Activated T-helper 1 cell treated with anti-CD3 and anti-CD28 coated beads, Interleukin-12 subunit alpha, Interleukin-12 subunit beta, Interleukin-2, Interleukin-4 antibody, amounts not matched to agents 30 ng/mL and 10 ng/mL and 1 ng/mL, durations not matched to agents 14 hours and 24 hours and 36 hours (primary cell): ENCODE measurements at regions of chr17 and their contacts with region 1.

Region 1: DNA sequence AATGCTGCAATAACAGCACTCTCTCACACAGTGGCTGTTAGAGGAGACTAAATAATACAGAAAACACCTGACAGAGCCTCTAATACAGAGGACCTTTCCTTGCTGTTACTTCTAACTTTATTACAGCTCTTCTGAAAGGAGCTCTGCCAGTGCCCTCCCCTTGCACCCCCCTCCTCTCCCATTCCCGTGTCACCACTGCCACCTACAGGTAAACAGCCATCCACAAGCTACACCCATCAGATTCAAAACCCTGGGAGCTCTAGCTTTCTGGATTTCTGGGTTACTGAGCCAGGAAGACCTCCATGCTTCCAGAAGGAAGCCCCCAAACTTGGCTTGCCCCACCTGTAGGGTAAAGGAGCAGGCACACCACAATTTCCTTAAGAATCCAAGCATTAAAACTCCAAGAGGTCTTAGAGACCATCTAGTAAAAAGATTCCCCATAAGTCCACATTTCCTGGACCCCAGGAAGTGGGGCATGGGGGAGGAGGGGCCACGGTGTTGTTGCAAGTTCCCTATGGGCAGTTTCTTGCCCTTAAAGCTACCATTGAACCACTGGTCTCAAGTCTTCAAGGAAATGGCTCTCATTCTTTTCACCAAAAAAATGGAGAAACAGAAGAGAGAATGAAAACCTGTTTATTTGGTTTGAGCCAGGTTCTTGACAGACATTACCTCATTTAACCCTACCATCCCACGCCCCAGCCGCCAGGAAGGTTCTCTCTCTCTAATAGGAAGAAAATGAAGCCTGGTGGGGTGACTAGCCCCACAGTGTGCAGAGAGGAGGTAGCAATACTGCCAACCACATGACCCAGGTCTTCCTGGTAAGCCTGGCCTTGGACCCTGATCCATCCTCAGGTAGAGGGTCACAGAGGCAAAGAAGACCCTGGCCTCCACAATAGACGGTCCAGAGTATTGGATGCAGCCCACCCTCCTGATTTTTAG is 52.8 kb downstream of the TOM1L2 start:
- DNase-seq: peak; percentile 36
- H3K4me3 Mint-ChIP-seq: no peak overlapping the region
- H3K27ac Mint-ChIP-seq: no peak overlapping the region
- H3K4me1 Mint-ChIP-seq: peaks cover 7% of the 10 kb centered on the region
- H3K27me3 Mint-ChIP-seq: no peaks in the 10 kb centered on the region

Region 2: DNA sequence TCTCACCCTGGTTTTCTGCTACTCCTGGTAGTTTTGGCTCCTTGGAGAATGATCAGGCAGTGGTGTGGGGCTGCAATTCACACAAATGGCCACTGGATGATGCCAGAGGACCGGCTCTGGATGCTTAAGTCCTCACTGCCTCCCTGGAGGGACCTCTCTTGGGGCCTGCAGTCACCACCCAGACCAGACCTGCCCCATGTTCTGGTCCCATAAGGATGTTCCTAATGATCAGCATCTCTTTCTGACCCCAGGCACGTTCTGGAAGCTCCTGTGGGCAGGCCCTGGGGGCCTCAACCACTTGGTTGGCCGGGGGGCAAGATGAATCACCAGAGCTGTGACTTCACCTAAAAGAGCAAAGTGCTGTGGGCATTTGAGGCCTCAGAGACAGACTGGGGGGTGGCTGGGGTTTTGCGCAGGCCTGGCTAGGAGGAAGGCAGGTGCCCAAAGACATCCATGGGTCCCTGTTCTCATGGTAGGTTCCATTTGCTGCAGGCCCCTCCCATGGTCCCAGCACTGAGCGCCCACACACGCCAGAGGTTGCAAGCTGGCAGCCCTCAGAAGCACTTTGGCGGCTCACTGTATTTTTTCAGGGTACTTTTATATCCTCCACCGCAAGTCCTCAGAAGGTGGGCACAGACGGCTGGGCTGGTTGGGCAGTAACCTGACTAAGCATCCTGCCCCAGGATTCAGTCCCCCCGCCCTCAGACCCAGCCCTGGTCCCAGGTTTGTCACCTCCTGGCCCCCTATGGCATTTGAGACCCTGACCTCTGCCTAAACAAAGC is 563.1 kb before region 1 on chr17:
- intact Hi-C with region 1: loop called (anchors 1 kb)
- DNase-seq: peak; percentile 55
- H3K4me3 Mint-ChIP-seq: no peak overlapping the region
- H3K27ac Mint-ChIP-seq: no peak overlapping the region
- H3K4me1 Mint-ChIP-seq: no peaks in the 10 kb centered on the region
- H3K27me3 Mint-ChIP-seq: peaks cover 19% of the 10 kb centered on the region

Region 3: DNA sequence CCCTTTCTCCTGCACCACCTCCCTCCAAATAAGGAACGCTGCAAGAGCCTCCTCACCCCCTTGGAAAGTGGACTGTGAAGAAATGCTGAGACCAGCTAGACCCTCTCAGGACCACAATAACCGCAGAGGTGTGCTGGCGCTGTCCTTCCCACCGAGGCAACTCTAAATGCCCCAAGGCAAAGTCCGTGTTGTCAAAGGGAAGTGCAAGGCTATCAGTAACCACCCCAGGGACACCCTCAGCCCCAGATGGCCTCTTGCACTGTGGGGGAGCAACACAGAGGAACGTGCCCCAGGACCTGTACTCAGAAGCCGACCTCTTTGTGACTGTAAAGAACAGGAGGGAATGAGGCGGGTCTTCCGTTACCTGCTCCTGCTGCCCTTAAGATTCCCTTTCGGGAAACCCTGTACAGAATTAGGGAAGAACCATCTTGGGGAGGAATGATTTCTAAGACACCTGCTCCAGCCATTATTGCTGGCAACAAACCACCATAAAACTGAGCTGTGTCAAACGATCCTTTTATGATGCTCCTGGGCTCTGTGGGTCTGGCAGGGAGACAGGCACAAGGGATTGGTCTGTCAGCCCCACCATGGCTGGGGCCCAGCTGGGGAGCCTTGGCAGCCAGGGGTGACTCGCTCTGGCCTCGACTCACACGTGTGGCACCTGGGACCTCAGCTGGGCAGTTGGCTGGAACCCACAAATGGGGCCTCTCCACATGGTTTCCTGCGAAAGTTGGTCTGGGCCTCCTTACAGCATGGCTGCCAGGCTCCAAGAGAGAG is 457.2 kb before region 1 on chr17:
- intact Hi-C with region 1: no loop called
- DNase-seq: no peak
- H3K4me3 Mint-ChIP-seq: no peak overlapping the region
- H3K27ac Mint-ChIP-seq: no peak overlapping the region
- H3K4me1 Mint-ChIP-seq: no peaks in the 10 kb centered on the region
- H3K27me3 Mint-ChIP-seq: no peaks in the 10 kb centered on the region

Region 4: GRCh38 chr17:17681187-17681848 is 238.1 kb before region 1 on chr17 and contains the start of gene RAI1:
- intact Hi-C with region 1: loop called (anchors 1 kb)
- DNase-seq: peak; percentile 64
- H3K4me3 Mint-ChIP-seq: peak within 1 kb of the TSS; percentile 89
- H3K27ac Mint-ChIP-seq: peak within 1 kb of the TSS; percentile 84
- H3K4me1 Mint-ChIP-seq: peaks cover 22% of the 10 kb centered on the region
- H3K27me3 Mint-ChIP-seq: peaks cover 10% of the 10 kb centered on the region
- total RNA-seq, gene RAI1: 31.1 and 32.3 TPM in 2 replicates

Region 5: GRCh38 chr17:17812211-17813057 is 107.0 kb before region 1 on chr17:
- intact Hi-C with region 1: loop called (anchors 1 kb)
- DNase-seq: peak; percentile 40
- H3K4me3 Mint-ChIP-seq: no peak overlapping the region
- H3K27ac Mint-ChIP-seq: no peak overlapping the region
- H3K4me1 Mint-ChIP-seq: peaks cover 5% of the 10 kb centered on the region
- H3K27me3 Mint-ChIP-seq: no peaks in the 10 kb centered on the region

Region 6: DNA sequence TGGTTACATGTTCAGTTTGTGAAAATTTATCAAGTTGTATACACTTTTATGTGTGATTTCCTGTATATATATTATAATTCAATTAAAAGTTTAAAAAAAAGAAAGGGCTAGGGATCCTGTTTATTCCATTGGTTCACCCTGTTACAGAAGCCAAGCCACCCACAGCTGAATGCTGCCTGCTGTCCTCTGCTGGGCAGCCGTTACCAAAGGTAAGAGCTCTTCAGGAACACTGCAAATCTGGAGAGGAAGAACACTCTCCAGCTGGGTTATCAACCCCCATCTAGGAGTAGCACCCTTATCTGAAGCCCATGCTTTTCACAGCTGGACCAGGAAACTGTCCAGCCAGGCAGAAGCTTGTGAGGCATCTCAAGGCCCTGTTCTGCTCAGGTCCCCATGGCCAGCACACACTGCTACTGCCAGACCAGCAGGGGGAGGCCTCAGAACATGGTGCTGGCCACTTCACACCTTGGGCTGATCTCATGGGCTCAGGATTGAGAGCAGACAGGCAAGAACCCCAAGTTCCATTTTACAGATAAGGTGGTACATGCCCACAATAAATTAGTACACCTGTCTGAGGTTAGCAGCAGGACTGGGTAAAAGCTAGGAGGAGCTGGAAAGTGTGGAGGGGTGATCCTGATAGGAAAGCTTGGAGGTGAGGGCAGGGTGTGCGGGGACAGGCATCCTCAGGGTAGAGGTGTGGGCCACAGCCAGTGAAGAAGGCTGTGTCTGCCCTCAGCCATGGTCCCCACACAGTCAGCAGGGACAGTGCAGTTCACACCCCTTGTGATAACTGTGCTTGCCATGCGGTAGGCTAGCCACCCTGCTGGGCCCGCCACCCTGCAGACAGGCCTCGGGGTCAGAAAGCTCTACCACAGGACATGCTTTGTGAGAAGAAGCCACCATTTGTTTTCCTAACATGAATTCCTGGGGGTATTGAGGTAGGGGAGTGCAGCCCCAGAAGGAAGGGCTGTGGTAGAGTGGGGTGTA is 28.4 kb before region 1 on chr17:
- intact Hi-C with region 1: loop called (anchors 2 kb)
- DNase-seq: peak; percentile 25
- H3K4me3 Mint-ChIP-seq: no peak overlapping the region
- H3K27ac Mint-ChIP-seq: no peak overlapping the region
- H3K4me1 Mint-ChIP-seq: peaks cover 8% of the 10 kb centered on the region
- H3K27me3 Mint-ChIP-seq: no peaks in the 10 kb centered on the region

Region 7: GRCh38 chr17:17950806-17951205 is 31.4 kb after region 1 on chr17:
- intact Hi-C with region 1: no loop called
- DNase-seq: no peak
- H3K4me3 Mint-ChIP-seq: no peak overlapping the region
- H3K27ac Mint-ChIP-seq: no peak overlapping the region
- H3K4me1 Mint-ChIP-seq: peaks cover 12% of the 10 kb centered on the region
- H3K27me3 Mint-ChIP-seq: no peaks in the 10 kb centered on the region

Region 8: DNA sequence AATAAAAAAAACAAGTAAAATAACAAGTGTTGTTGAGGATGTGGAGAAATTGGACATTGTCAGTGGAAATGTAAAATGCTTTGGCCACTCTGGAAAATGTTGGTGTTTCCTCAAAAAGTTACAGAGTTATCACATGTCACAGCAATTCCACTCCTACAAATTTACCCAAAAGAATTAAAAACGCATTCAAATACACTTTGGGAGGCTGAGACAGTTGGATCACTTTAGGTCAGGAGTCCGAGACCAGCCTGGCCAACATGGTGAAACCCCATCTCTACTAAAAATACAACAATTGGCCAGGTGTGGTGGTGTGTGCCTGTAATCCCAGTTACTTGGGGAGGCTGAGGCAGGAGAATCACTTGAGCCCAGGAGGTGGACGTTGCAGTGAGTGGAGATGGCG is 389.8 kb after region 1 on chr17:
- intact Hi-C with region 1: no loop called
- DNase-seq: no peak
- H3K4me3 Mint-ChIP-seq: no peak overlapping the region
- H3K27ac Mint-ChIP-seq: no peak overlapping the region
- H3K4me1 Mint-ChIP-seq: peaks cover 33% of the 10 kb centered on the region
- H3K27me3 Mint-ChIP-seq: no peaks in the 10 kb centered on the region